Activated CD4-positive, alpha-beta T cell treated with anti-CD3 and anti-CD28 coated beads, Interleukin-2, amount 10 ng/mL, durations not matched to agents 24 days and 14 days (primary cell): ENCODE measurements at regions of chr19 and their contacts with region 1.

Region 1: DNA sequence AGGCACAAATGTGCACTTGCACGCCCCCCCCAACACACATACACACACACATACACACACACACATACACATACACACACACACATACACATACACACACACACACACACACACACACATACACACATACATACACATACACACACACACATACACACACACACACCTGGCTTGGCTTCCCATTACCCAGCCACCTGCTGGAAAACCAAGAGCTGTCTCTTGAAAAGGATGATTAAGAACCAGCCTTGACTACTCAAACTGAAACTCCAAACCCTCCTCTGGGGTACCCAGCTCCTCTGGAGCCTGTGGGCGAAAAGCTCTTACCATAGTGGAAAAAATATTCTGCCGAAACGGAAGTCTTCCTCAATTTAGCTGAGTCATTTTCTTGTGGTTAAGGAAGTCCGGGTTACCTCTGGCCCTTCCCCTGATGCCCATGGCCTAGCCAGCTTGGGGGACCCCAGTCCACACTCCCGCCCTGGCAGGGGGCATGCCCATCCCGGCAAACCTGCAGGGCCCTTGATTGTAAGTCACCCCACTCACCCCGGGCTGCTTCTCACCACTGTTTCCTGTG is 21.9 kb downstream of the CEBPA start:
- DNase-seq: peak; percentile 79
- H3K4me3 Mint-ChIP-seq: peak overlapping the region; percentile 2
- H3K27ac Mint-ChIP-seq: peak overlapping the region; percentile 77
- H3K4me1 Mint-ChIP-seq: peaks cover 12% of the 10 kb centered on the region
- H3K27me3 Mint-ChIP-seq: peaks cover 5% of the 10 kb centered on the region

Region 2: DNA sequence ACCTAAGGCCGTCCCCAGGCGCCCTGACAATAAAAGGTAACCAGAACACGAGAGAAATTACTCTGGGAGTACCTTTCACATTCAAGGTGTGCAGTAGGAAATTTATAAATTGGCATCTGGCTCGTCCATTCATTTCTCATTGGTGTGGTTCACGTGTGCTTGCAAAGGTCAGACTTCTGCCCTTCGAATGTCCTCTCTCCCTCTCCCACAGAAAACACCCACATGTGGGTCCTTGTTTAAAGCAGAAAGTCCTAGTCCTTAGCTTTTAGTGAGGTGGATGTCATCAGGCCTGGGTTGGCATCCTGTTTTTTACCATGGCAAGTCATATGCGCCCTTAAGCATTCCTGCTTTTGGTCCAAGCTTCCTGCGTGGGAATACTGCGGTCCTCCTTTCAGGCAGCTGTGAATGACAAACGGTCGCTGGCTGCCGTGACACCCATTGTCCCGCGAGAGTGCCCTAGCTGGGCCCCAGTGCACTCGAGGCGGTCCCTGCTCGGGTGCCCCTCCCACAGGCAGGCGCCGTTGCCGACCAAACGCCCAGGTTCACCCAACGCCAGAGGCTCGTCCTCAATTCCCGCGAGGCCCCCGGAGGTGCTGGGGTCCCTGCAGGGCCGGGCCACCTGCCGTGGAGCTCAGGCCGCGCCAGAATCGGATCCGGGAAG is 589.0 kb before region 1 on chr19 and contains the start of gene NUDT19:
- intact Hi-C with region 1: loop called (anchors 2 kb)
- DNase-seq: peak; percentile 94
- H3K4me3 Mint-ChIP-seq: peak within 1 kb of the TSS; percentile 94
- H3K27ac Mint-ChIP-seq: peak within 1 kb of the TSS; percentile 97
- H3K4me1 Mint-ChIP-seq: peaks cover 44% of the 10 kb centered on the region
- H3K27me3 Mint-ChIP-seq: no peaks in the 10 kb centered on the region
- total RNA-seq, gene NUDT19: 25.3 and 25.9 TPM in 2 replicates

Region 3: GRCh38 chr19:33159893-33160292 is 120.5 kb before region 1 on chr19:
- intact Hi-C with region 1: loop called (anchors 1 kb)
- DNase-seq: no peak
- H3K4me3 Mint-ChIP-seq: no peak overlapping the region
- H3K27ac Mint-ChIP-seq: peak overlapping the region; percentile 95
- H3K4me1 Mint-ChIP-seq: peaks cover 32% of the 10 kb centered on the region
- H3K27me3 Mint-ChIP-seq: no peaks in the 10 kb centered on the region

Region 4: GRCh38 chr19:33260628-33261418 is 19.6 kb before region 1 on chr19:
- intact Hi-C with region 1: no loop called
- DNase-seq: no peak
- H3K4me3 Mint-ChIP-seq: no peak overlapping the region
- H3K27ac Mint-ChIP-seq: no peak overlapping the region
- H3K4me1 Mint-ChIP-seq: peaks cover 3% of the 10 kb centered on the region
- H3K27me3 Mint-ChIP-seq: peaks cover 9% of the 10 kb centered on the region

Region 5: GRCh38 chr19:33302175-33302973 is 21.9 kb after region 1 on chr19 and contains the start of gene CEBPA:
- intact Hi-C with region 1: loop called (anchors 2 kb)
- DNase-seq: peak; percentile 87
- H3K4me3 Mint-ChIP-seq: peak within 1 kb of the TSS; percentile 72
- H3K27ac Mint-ChIP-seq: no peak within 1 kb of the TSS
- H3K4me1 Mint-ChIP-seq: no peaks in the 10 kb centered on the region
- H3K27me3 Mint-ChIP-seq: peaks cover 45% of the 10 kb centered on the region
- total RNA-seq, gene CEBPA: 1.2 and 1.4 TPM in 2 replicates

Region 6: GRCh38 chr19:33514885-33515551 is 234.6 kb after region 1 on chr19:
- intact Hi-C with region 1: no loop called
- DNase-seq: no peak
- H3K4me3 Mint-ChIP-seq: no peak overlapping the region
- H3K27ac Mint-ChIP-seq: no peak overlapping the region
- H3K4me1 Mint-ChIP-seq: peaks cover 4% of the 10 kb centered on the region
- H3K27me3 Mint-ChIP-seq: no peaks in the 10 kb centered on the region

Region 7: GRCh38 chr19:33621811-33622504 is 341.5 kb after region 1 on chr19 and contains the start of gene CHST8:
- intact Hi-C with region 1: no loop called
- DNase-seq: no peak
- H3K4me3 Mint-ChIP-seq: no peak within 1 kb of the TSS
- H3K27ac Mint-ChIP-seq: no peak within 1 kb of the TSS
- H3K4me1 Mint-ChIP-seq: no peaks in the 10 kb centered on the region
- H3K27me3 Mint-ChIP-seq: peaks cover 39% of the 10 kb centered on the region
- total RNA-seq, gene CHST8: not detected in 2 replicates

Region 8: GRCh38 chr19:34501339-34502320 is 1221.2 kb after region 1 on chr19:
- intact Hi-C with region 1: no loop called
- DNase-seq: peak; percentile 96
- H3K4me3 Mint-ChIP-seq: no peak overlapping the region
- H3K27ac Mint-ChIP-seq: no peak overlapping the region
- H3K4me1 Mint-ChIP-seq: peaks cover 3% of the 10 kb centered on the region
- H3K27me3 Mint-ChIP-seq: peaks cover 6% of the 10 kb centered on the region